Naive thymus-derived CD4-positive, alpha-beta T cell (primary cell): ENCODE measurements at regions of chr3 and their contacts with region 1.

Region 1: DNA sequence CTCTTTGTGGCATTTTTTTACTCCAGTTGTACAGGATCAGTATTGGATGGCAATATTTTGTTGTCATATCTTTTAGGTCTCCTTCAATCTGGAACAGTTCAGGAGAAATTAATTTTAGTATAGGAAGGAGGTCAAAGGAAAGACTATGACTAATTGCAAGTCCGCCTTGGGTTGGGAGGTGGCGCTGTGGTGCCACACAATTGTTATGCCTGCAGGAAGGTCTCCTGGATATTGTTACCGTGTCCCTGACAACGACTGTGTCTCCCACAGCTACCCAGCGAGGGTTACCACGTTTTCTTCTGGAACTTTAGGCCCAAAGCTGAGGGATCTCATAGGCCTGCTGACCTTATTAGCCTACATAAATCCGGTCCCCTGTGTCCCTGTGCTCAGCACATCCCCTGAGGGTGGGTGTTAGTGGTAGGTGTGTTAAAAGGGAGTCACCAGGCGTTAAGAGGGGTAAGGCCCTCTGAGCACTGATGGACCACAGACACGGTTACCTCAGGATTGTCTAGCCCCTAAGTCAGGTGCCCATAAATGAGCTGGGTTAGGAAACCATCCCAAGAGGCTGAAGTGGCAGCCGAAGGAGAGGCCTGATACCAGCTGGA is 31.5 kb downstream of the KCNAB1 start:
- DNase-seq: peak in 7 of 9 donors; percentile 18 to 40 (median 27)
- ATAC-seq: peak; percentile 58
- H3K4me3 ChIP-seq: no peak overlapping the region
- H3K4me3 Mint-ChIP-seq: no peak overlapping the region
- H3K27ac ChIP-seq: no peak overlapping the region
- H3K27ac Mint-ChIP-seq: no peak overlapping the region
- H3K4me1 ChIP-seq: no peaks in the 10 kb centered on the region
- H3K4me1 Mint-ChIP-seq: peaks cover 0 to 7% (median 0%) of the 10 kb centered on the region in 7 donors
- H3K27me3 ChIP-seq: no peaks in the 10 kb centered on the region
- H3K27me3 Mint-ChIP-seq: peaks cover 0 to 18% (median 0%) of the 10 kb centered on the region in 5 donors

Region 2: DNA sequence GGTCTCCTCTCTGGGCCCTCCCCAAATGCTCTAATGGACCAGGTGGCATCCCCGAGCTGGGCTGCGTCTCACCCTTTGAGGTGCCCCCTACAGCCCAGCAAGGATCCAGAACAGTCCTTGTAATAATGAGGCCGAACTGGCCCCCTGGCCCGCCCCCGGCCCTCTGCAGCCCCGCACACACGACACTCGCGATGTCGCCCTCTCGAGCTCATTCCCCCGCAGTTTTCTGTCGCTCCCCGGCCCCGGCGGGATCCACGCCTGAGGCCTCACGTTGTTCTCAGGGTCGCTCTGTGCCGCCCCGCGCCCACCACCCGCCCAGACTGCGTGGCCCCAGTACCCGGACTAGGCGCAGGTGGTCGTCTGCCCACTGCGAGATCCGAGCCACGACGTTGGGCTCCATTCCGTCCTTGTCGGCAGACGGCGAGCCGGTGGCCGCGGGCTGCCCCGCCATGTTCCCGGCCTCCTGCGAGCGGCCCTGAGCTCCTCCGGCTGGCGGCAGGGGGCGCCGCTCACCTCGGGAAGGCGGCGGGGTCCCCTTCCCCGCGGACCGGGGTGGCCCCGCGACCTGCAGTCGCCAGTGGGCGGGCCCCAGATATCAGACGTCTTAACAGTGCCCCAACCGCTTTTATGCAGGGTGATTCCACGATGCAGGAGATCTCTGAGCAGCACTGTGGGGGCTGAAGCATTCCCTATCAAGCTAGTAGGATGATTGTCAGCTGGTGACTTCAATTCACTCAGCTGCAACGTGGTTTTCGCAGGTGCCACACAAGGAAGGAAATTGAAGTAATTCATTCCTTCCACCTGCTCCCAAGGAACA is 345.9 kb before region 1 on chr3 and contains the start of gene C3orf33:
- CTCF ChIA-PET with region 1: no interaction called
- POLR2A ChIA-PET with region 1: no interaction called
- intact Hi-C with region 1: loop called in 1 of 2 experiments (anchors 1 kb)
- DNase-seq: peak; percentile 52 to 85 (median 78)
- ATAC-seq: peak; percentile 98
- H3K4me3 ChIP-seq: peak within 1 kb of the TSS; percentile 71
- H3K4me3 Mint-ChIP-seq: peak within 1 kb of the TSS; percentile 79 to 91 (median 90)
- H3K27ac ChIP-seq: peak within 1 kb of the TSS; percentile 79
- H3K27ac Mint-ChIP-seq: peak within 1 kb of the TSS; percentile 71 to 94 (median 82)
- H3K4me1 ChIP-seq: no peaks in the 10 kb centered on the region
- H3K4me1 Mint-ChIP-seq: peaks cover 8 to 28% (median 17%) of the 10 kb centered on the region in 7 donors
- H3K27me3 ChIP-seq: no peaks in the 10 kb centered on the region
- H3K27me3 Mint-ChIP-seq: peaks cover 6 to 15% (median 10%) of the 10 kb centered on the region in 5 donors
- total RNA-seq, gene C3orf33: 1.1 to 4.6 (median 2.7) TPM

Region 3: DNA sequence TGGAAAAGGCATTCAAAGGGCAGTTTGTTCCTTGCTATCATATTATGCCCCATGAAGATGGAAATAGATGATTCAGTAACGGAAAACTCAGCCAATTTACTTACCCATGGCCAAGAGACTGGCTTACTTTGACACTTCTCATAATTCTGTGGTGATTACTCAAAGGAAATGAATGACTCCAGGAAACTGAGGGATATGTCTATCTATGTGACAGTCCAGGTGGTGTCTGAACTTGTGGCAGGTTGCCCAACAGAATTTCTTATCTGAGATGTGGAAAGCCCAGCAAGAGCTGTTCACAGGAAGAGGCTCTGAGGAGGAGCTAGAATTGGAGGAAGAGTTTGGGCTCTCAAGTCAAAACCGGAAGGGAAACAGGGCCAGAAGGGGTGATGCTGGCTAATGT is 59.7 kb after region 1 on chr3:
- CTCF ChIA-PET with region 1: no interaction called
- POLR2A ChIA-PET with region 1: no interaction called
- intact Hi-C with region 1: no loop called
- DNase-seq: no peak
- ATAC-seq: no peak
- H3K4me3 ChIP-seq: no peak overlapping the region
- H3K4me3 Mint-ChIP-seq: no peak overlapping the region
- H3K27ac ChIP-seq: no peak overlapping the region
- H3K27ac Mint-ChIP-seq: no peak overlapping the region
- H3K4me1 ChIP-seq: no peaks in the 10 kb centered on the region
- H3K4me1 Mint-ChIP-seq: no peaks in the 10 kb centered on the region
- H3K27me3 ChIP-seq: no peaks in the 10 kb centered on the region
- H3K27me3 Mint-ChIP-seq: peaks cover 24 to 48% (median 35%) of the 10 kb centered on the region in 5 donors

Region 4: DNA sequence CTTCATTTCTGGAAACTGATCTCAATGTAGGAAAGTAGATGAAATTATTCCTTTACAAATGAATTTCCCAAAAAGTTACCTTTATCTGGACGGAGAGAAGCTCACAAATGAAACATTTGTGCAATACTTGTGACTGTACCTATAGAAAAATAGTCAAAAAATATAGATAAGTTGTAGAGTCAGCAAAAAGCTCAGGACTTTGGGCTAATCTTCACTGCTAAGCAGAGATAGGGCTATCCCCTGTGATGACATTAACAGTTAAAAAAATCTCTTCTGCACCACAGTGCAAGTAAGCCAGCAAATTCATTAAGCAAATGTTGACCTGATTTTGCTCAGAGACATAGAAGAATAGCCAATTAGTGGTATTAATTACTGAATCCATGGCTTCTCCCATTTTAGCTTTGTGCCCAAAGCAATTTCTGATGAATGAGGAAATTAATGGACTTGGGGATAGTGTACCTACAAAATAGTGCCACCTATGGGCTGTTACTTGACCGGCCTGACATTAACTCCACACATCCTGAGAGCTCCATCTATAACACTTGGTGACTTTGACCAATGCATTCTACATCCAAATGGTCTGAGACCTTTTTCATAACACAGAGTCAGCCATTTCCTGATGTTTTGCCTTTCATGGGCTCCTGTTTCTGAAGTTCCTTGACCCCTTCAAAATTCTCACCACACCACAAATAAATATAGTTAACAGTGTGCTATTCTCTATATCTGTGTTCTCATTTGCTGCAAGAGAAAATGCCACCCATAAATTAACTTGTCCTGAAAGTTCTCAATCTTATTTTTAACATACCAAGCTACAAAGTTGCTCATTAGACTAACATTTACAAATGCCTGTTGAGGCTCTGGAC is 298.0 kb after region 1 on chr3:
- CTCF ChIA-PET with region 1: no interaction called
- POLR2A ChIA-PET with region 1: no interaction called
- intact Hi-C with region 1: loop called (anchors 2 kb)
- DNase-seq: no peak
- ATAC-seq: no peak
- H3K4me3 ChIP-seq: no peak overlapping the region
- H3K4me3 Mint-ChIP-seq: no peak overlapping the region
- H3K27ac ChIP-seq: no peak overlapping the region
- H3K27ac Mint-ChIP-seq: no peak overlapping the region
- H3K4me1 ChIP-seq: no peaks in the 10 kb centered on the region
- H3K4me1 Mint-ChIP-seq: peaks cover 0 to 2% (median 0%) of the 10 kb centered on the region in 7 donors
- H3K27me3 ChIP-seq: no peaks in the 10 kb centered on the region
- H3K27me3 Mint-ChIP-seq: peaks cover 8 to 45% (median 9%) of the 10 kb centered on the region in 5 donors

Region 5: GRCh38 chr3:156509189-156510174 is 357.6 kb after region 1 on chr3:
- CTCF ChIA-PET with region 1: interaction called, 91 read pairs
- POLR2A ChIA-PET with region 1: no interaction called
- intact Hi-C with region 1: loop called (anchors 1 kb)
- DNase-seq: peak in 7 of 9 donors; percentile 30 to 71 (median 62)
- ATAC-seq: peak; percentile 82
- H3K4me3 ChIP-seq: no peak overlapping the region
- H3K4me3 Mint-ChIP-seq: no peak overlapping the region
- H3K27ac ChIP-seq: no peak overlapping the region
- H3K27ac Mint-ChIP-seq: no peak overlapping the region
- H3K4me1 ChIP-seq: no peaks in the 10 kb centered on the region
- H3K4me1 Mint-ChIP-seq: peaks cover 0 to 21% (median 9%) of the 10 kb centered on the region in 7 donors
- H3K27me3 ChIP-seq: no peaks in the 10 kb centered on the region
- H3K27me3 Mint-ChIP-seq: peaks cover 0 to 40% (median 17%) of the 10 kb centered on the region in 5 donors

Region 6: GRCh38 chr3:156542101-156542714 is 390.3 kb after region 1 on chr3:
- CTCF ChIA-PET with region 1: interaction called, 11 read pairs
- POLR2A ChIA-PET with region 1: no interaction called
- intact Hi-C with region 1: loop called (anchors 1 kb)
- DNase-seq: no peak
- ATAC-seq: no peak
- H3K4me3 ChIP-seq: no peak overlapping the region
- H3K4me3 Mint-ChIP-seq: no peak overlapping the region
- H3K27ac ChIP-seq: no peak overlapping the region
- H3K27ac Mint-ChIP-seq: no peak overlapping the region
- H3K4me1 ChIP-seq: no peaks in the 10 kb centered on the region
- H3K4me1 Mint-ChIP-seq: peaks cover 7 to 28% (median 12%) of the 10 kb centered on the region in 7 donors
- H3K27me3 ChIP-seq: no peaks in the 10 kb centered on the region
- H3K27me3 Mint-ChIP-seq: no peaks in the 10 kb centered on the region

Region 7: GRCh38 chr3:157081681-157082210 is 929.8 kb after region 1 on chr3:
- CTCF ChIA-PET with region 1: interaction called, 7 read pairs
- POLR2A ChIA-PET with region 1: no interaction called
- intact Hi-C with region 1: loop called (anchors 1 kb)
- DNase-seq: peak; percentile 60 to 86 (median 70)
- ATAC-seq: peak; percentile 96
- H3K4me3 ChIP-seq: no peak overlapping the region
- H3K4me3 Mint-ChIP-seq: no peak overlapping the region
- H3K27ac ChIP-seq: no peak overlapping the region
- H3K27ac Mint-ChIP-seq: peak overlapping the region in 8 of 9 donors; percentile 9 to 79 (median 56)
- H3K4me1 ChIP-seq: peaks cover 0 to 12% of the 10 kb centered on the region in 2 donors
- H3K4me1 Mint-ChIP-seq: peaks cover 0 to 54% (median 6%) of the 10 kb centered on the region in 7 donors
- H3K27me3 ChIP-seq: no peaks in the 10 kb centered on the region
- H3K27me3 Mint-ChIP-seq: no peaks in the 10 kb centered on the region

Region 8: GRCh38 chr3:157201648-157202278 is 1049.8 kb after region 1 on chr3:
- CTCF ChIA-PET with region 1: no interaction called
- POLR2A ChIA-PET with region 1: no interaction called
- intact Hi-C with region 1: loop called (anchors 1 to 2 kb)
- DNase-seq: peak in 5 of 9 donors; percentile 10 to 37 (median 16)
- ATAC-seq: peak; percentile 51
- H3K4me3 ChIP-seq: no peak overlapping the region
- H3K4me3 Mint-ChIP-seq: no peak overlapping the region
- H3K27ac ChIP-seq: no peak overlapping the region
- H3K27ac Mint-ChIP-seq: no peak overlapping the region
- H3K4me1 ChIP-seq: no peaks in the 10 kb centered on the region
- H3K4me1 Mint-ChIP-seq: no peaks in the 10 kb centered on the region
- H3K27me3 ChIP-seq: no peaks in the 10 kb centered on the region
- H3K27me3 Mint-ChIP-seq: peaks cover 0 to 11% (median 0%) of the 10 kb centered on the region in 5 donors